Mammary epithelial cell (primary cell): ENCODE measurements at regions of chr3 and their contacts with region 1.

Region 1: DNA sequence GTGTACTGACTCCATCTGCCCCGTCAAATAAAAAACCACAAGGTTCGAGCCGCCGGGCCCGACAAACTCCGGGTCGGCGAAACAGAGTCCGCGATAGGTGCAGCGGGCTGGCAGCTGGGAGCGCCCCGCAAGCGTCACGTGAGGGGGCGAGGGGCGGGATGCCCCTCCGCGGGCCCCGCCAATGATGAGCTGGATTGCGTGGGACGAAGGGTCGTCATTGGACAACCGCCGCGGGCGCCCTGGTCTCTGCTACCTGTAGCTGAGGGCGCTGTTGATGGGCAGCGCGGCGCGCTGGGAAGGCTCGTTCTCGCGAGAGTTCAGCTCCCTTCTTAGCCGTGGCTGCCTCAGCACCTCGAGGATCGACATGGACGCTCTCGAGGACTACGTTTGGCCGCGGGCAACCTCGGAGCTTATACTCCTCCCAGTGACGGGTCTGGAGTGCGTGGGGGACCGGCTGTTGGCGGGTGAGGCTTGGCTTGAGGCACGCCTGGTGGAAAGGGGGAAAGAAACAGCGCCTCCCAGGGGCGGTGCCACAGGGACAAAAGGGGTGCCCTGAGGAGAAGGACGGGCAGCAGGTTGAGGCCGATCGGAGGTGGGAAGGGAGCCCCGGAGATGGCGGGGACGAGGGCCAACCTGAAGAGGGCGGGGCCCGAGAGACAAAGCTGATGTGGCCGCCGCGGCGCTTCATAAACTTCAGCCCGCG is at the start of gene WDR6:
- DNase-seq: peak; percentile 98
- H3K4me3 ChIP-seq: peak within 1 kb of the TSS; percentile 56 to 84 (median 76)
- H3K27ac ChIP-seq: peak within 1 kb of the TSS; percentile 67
- H3K4me1 ChIP-seq: peaks cover 15% of the 10 kb centered on the region
- H3K27me3 ChIP-seq: no peaks in the 10 kb centered on the region
- CTCF ChIP-seq: peak; percentile 18 to 53
- total RNA-seq, gene WDR6: 91.2 to 108 TPM

Region 2: DNA sequence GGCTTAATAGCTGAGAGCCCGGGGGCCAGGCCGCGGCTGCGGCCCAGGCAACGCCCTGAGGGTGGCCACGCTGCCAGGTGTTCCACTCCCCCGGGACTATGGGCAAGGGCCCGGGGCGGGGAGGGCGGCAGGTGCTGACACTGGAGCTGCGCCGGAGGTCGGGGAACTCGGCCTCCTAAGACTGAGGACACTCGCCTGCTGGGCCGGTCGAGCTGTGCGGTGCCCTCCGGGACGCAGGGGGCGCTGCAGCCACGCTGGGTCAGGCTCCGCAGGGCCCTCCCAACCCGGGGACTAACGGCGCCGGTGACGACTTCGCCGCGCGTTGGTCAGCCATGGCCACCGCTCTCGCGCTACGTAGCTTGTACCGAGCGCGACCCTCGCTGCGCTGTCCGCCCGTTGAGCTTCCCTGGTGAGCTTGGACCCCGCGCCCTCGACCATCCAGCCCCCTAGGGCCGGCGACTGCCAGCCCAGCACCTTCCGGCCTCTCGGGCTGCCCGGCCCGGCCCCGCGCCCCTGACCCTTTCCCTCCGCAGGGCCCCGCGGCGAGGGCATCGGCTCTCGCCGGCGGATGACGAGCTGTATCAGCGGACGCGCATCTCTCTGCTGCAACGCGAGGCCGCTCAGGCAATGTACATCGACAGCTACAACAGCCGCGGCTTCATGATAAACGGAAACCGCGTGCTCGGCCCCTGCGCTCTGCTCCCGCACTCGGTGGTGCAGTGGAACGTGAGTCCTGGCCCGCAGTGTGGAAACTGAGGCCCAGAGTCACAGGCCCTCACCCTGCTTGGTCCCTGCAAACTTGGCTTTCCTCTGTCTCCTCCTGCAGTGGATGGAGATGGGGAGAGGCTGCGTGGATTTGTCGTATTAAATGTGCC is 14.8 kb after region 1 on chr3 and contains the start of gene NDUFAF3:
- CTCF ChIA-PET with region 1: interaction called, 6 read pairs
- dilution Hi-C with region 1: no loop called
- in situ Hi-C with region 1: no loop called
- intact Hi-C with region 1: loop called (anchors 2 kb)
- DNase-seq: peak; percentile 95
- H3K4me3 ChIP-seq: peak within 1 kb of the TSS; percentile 65 to 89 (median 86)
- H3K27ac ChIP-seq: peak within 1 kb of the TSS; percentile 89
- H3K4me1 ChIP-seq: peaks cover 34% of the 10 kb centered on the region
- H3K27me3 ChIP-seq: no peaks in the 10 kb centered on the region
- CTCF ChIP-seq: peak; percentile 75 to 97
- total RNA-seq, gene NDUFAF3: 27.0 to 83.6 TPM

Region 3: GRCh38 chr3:49057268-49057667 is 50.0 kb after region 1 on chr3:
- CTCF ChIA-PET with region 1: no interaction called
- dilution Hi-C with region 1: no loop called
- in situ Hi-C with region 1: no loop called
- intact Hi-C with region 1: no loop called
- DNase-seq: no peak
- H3K4me3 ChIP-seq: no peak overlapping the region
- H3K27ac ChIP-seq: no peak overlapping the region
- H3K4me1 ChIP-seq: no peaks in the 10 kb centered on the region
- H3K27me3 ChIP-seq: no peaks in the 10 kb centered on the region
- CTCF ChIP-seq: no peak